Activated B cell treated with CpG ODN at 0.5 μM for 24 hours (primary cell): ENCODE measurements at regions of chr7 and their contacts with region 1.

Region 1: GRCh38 chr7:151110941-151111645 is 24.8 kb downstream of the AGAP3 start:
- DNase-seq: peak; percentile 55
- ATAC-seq: peak; percentile 81
- H3K4me3 Mint-ChIP-seq: no peak overlapping the region
- H3K27ac Mint-ChIP-seq: no peak overlapping the region
- H3K4me1 Mint-ChIP-seq: peaks cover 2% of the 10 kb centered on the region
- H3K27me3 Mint-ChIP-seq: peaks cover 27% of the 10 kb centered on the region
- CTCF ChIP-seq: no peak

Region 2: GRCh38 chr7:150778738-150779301 is 332.3 kb before region 1 on chr7:
- CTCF ChIA-PET with region 1: no interaction called
- POLR2A ChIA-PET with region 1: no interaction called
- intact Hi-C with region 1: loop called (anchors 1 kb)
- DNase-seq: peak; percentile 37
- ATAC-seq: peak; percentile 49
- H3K4me3 Mint-ChIP-seq: no peak overlapping the region
- H3K27ac Mint-ChIP-seq: no peak overlapping the region
- H3K4me1 Mint-ChIP-seq: no peaks in the 10 kb centered on the region
- H3K27me3 Mint-ChIP-seq: peaks cover 18% of the 10 kb centered on the region
- CTCF ChIP-seq: peak; percentile 99

Region 3: GRCh38 chr7:150838970-150839650 is 272.0 kb before region 1 on chr7:
- CTCF ChIA-PET with region 1: no interaction called
- POLR2A ChIA-PET with region 1: no interaction called
- intact Hi-C with region 1: no loop called
- DNase-seq: no peak
- ATAC-seq: no peak
- H3K4me3 Mint-ChIP-seq: no peak overlapping the region
- H3K27ac Mint-ChIP-seq: no peak overlapping the region
- H3K4me1 Mint-ChIP-seq: no peaks in the 10 kb centered on the region
- H3K27me3 Mint-ChIP-seq: peaks cover 5% of the 10 kb centered on the region
- CTCF ChIP-seq: no peak

Region 4: DNA sequence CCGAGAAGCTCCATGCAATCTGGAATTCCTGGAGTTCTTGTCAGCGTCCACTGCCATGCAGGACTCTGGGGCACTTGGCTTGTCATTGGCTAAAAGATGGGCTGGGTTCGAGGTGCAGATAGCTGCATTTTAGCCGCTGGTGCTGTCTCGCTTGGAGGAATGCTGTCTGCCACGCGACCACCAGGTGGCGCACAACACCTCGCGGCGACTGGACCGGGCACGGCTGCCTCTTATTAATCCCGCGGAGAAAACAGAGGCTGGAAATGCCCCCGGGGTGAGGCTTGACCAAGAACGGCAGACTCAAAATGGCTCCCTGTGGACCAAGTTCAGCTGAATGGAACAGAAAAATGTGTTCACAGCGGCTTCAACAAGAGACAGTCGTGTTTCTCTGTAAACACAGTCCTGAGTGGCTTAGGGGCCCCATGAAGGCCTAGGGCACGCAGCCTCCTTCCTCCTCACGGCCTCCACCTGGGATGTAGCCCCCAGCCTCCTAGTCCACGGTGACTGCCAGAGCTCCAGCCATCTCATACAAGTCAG is 212.6 kb before region 1 on chr7:
- CTCF ChIA-PET with region 1: interaction called, 43 read pairs
- POLR2A ChIA-PET with region 1: no interaction called
- intact Hi-C with region 1: loop called (anchors 1 kb)
- DNase-seq: peak; percentile 69
- ATAC-seq: peak; percentile 78
- H3K4me3 Mint-ChIP-seq: peak overlapping the region; percentile 24
- H3K27ac Mint-ChIP-seq: no peak overlapping the region
- H3K4me1 Mint-ChIP-seq: peaks cover 33% of the 10 kb centered on the region
- H3K27me3 Mint-ChIP-seq: peaks cover 38% of the 10 kb centered on the region
- CTCF ChIP-seq: peak; percentile 92

Region 5: GRCh38 chr7:150962553-150963399 is 148.3 kb before region 1 on chr7:
- CTCF ChIA-PET with region 1: interaction called, 11 read pairs
- POLR2A ChIA-PET with region 1: no interaction called
- intact Hi-C with region 1: loop called (anchors 1 kb)
- DNase-seq: peak; percentile 36
- ATAC-seq: peak; percentile 94
- H3K4me3 Mint-ChIP-seq: no peak overlapping the region
- H3K27ac Mint-ChIP-seq: no peak overlapping the region
- H3K4me1 Mint-ChIP-seq: no peaks in the 10 kb centered on the region
- H3K27me3 Mint-ChIP-seq: peaks cover 45% of the 10 kb centered on the region
- CTCF ChIP-seq: no peak

Region 6: GRCh38 chr7:151028131-151028947 is 82.8 kb before region 1 on chr7 and contains the start of gene ABCB8:
- CTCF ChIA-PET with region 1: interaction called, 5 read pairs
- POLR2A ChIA-PET with region 1: no interaction called
- intact Hi-C with region 1: loop called (anchors 1 kb)
- DNase-seq: peak; percentile 94
- ATAC-seq: peak; percentile 93
- H3K4me3 Mint-ChIP-seq: peak within 1 kb of the TSS; percentile 96
- H3K27ac Mint-ChIP-seq: peak within 1 kb of the TSS; percentile 97
- H3K4me1 Mint-ChIP-seq: peaks cover 22% of the 10 kb centered on the region
- H3K27me3 Mint-ChIP-seq: peaks cover 9% of the 10 kb centered on the region
- CTCF ChIP-seq: no peak
- total RNA-seq, gene ABCB8: 38.9 and 46.5 TPM in 2 replicates

Region 7: DNA sequence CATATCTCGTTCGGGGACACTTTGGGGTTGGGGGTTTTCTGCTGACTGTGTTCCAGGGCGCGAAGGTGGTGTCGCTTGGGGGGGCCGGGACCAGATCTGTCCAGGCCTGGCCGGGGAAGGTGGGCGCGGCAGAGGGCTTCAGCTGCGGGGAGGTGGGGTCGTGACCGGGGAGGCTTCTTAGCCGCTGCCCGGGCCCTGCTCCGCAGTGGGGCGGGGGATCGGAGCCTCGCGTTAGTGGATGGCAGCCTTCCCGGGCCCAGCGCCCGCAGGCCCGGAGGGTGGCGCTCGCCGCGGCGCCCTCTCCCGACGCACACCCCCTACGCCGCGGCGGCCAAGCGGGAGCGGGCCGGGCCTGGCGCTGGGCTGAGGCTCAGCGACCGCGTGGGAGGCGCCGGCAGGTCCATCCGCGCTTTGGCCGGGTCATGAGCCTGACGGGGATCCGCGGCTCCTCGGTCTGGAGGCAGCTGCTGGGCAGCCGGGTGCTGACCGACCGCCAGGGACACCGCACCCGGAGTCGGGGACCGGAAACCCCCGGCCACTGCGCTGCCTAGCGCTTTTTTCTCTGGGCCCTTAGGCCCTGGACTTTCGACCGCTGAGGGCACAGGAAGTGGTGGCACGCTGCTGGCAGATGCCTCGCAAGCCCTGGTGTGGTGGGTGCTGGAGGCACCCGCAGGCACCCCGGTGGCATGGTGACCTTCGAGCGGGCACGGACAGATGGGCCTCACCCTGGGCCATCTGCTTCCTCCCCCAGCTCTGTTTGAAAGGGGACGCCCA is 23.7 kb before region 1 on chr7:
- CTCF ChIA-PET with region 1: interaction called, 3 read pairs
- POLR2A ChIA-PET with region 1: interaction called, 7 read pairs
- intact Hi-C with region 1: loop called (anchors 1 kb)
- DNase-seq: peak; percentile 50
- ATAC-seq: no peak
- H3K4me3 Mint-ChIP-seq: peak overlapping the region; percentile 86
- H3K27ac Mint-ChIP-seq: no peak overlapping the region
- H3K4me1 Mint-ChIP-seq: peaks cover 40% of the 10 kb centered on the region
- H3K27me3 Mint-ChIP-seq: peaks cover 21% of the 10 kb centered on the region
- CTCF ChIP-seq: no peak